Caco-2 (cell line): ENCODE measurements at regions of chr2 and their contacts with region 1.

Region 1: DNA sequence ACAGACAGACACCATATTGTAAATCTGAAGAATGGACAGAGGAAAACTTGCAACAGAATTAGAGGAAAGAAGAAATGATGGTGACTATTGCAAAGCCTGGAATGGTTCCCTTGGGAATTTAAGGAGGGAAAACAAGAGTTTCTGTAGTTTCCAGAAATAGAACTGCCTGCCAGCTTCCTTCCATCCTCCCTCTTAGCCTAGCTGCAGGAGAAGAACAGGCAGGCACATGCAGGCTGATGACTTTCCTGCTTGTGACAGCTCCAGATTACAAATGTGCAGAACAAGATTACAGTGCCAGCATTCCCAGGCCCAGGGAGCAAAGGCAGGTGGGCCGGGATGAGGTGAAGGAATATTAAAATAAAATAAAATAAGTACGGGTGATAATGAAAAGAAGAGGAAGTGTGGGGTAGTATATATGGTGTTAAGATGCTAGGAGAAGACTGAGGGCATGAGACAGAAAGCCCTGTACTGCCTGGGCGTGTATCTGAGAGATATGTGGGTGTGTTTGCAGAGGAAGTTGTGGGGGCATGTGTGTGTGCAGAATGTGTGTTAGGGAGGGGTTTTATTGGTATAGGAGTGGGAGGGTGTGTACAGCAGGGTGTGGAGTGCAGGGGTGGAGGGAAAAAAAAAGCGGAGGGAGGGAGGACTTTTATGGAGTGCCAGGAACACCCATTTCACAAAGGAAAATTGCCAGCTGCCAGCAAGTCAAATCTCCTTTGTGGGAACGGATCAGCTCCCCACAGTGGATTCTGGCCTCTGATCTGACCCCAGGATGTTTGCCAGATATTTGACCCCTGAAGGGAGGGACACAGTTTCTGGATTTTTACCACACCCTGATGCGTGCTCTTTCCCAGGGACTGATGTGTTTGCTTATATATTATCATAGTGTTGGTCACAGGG is 43.9 kb upstream of the NEMP2 start:
- DNase-seq: peak; percentile 74 to 91
- H3K4me3 ChIP-seq: no peak overlapping the region
- H3K4me3 Mint-ChIP-seq: peak overlapping the region; percentile 56
- H3K27ac Mint-ChIP-seq: peak overlapping the region; percentile 65
- H3K4me1 ChIP-seq: peaks cover 36% of the 10 kb centered on the region
- H3K4me1 Mint-ChIP-seq: peaks cover 33% of the 10 kb centered on the region
- H3K27me3 ChIP-seq: no peaks in the 10 kb centered on the region
- H3K27me3 Mint-ChIP-seq: no peaks in the 10 kb centered on the region
- CTCF ChIP-seq: no peak

Region 2: DNA sequence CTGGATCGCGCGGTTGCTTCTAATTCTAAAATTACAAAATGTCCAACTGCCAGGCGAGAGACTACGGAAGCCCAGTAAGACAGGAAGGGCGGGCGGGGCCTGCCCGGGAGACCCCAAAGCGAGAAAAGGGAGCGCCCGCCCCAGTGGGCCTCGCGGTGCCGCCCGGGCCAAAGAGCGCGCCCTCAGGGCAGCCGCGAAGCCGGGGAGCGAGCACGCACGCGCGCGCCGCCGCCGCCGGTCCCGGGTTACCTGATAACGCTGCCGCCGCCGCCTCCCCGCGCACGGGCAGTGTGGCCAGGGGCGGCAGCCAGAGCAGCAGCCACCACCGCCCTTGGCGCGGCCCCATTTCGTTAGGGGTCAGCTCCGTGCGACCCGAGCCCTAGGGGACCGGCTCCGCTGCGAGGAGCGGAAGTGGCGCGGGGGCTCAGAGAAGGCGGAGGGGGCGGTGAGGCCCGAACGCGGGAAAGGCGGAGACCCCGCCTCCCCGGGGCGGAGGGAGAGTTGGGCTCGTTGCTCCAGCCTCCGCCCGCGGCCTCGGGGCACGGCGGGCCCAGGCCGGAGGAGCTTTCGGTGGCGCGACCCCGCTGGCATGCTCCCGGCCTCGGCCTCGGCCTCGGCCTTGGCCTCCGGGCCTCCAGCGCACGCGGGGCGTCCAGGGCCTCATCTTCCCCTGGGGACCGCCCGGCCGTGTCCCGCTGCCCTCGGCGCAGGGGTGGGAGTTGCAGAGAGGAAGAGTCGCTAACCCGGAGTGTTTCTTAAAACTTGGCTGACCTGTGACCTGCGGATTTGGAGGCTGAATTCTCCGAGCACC is 43.9 kb before region 1 on chr2 and contains the start of gene NEMP2:
- CTCF ChIA-PET with region 1: no interaction called
- POLR2A ChIA-PET with region 1: no interaction called
- intact Hi-C with region 1: loop called (anchors 1 kb)
- DNase-seq: peak; percentile 92 to 93
- H3K4me3 ChIP-seq: peak within 1 kb of the TSS; percentile 72
- H3K4me3 Mint-ChIP-seq: peak within 1 kb of the TSS; percentile 81
- H3K27ac Mint-ChIP-seq: peak within 1 kb of the TSS; percentile 87
- H3K4me1 ChIP-seq: peaks cover 29% of the 10 kb centered on the region
- H3K4me1 Mint-ChIP-seq: peaks cover 25% of the 10 kb centered on the region
- H3K27me3 ChIP-seq: no peaks in the 10 kb centered on the region
- H3K27me3 Mint-ChIP-seq: no peaks in the 10 kb centered on the region
- CTCF ChIP-seq: no peak
- total RNA-seq, gene NEMP2: 19.1 and 20.2 TPM in 2 replicates

Region 3: GRCh38 chr2:190618030-190618429 is 39.6 kb after region 1 on chr2:
- CTCF ChIA-PET with region 1: no interaction called
- POLR2A ChIA-PET with region 1: no interaction called
- intact Hi-C with region 1: loop called (anchors 2 kb)
- DNase-seq: peak; percentile 65 to 73
- H3K4me3 ChIP-seq: no peak overlapping the region
- H3K4me3 Mint-ChIP-seq: peak overlapping the region; percentile 12
- H3K27ac Mint-ChIP-seq: peak overlapping the region; percentile 15
- H3K4me1 ChIP-seq: peaks cover 27% of the 10 kb centered on the region
- H3K4me1 Mint-ChIP-seq: peaks cover 26% of the 10 kb centered on the region
- H3K27me3 ChIP-seq: no peaks in the 10 kb centered on the region
- H3K27me3 Mint-ChIP-seq: no peaks in the 10 kb centered on the region
- CTCF ChIP-seq: no peak